ENCODE measurements at regions of chr2 and their contacts with region 1.

Region 1: DNA sequence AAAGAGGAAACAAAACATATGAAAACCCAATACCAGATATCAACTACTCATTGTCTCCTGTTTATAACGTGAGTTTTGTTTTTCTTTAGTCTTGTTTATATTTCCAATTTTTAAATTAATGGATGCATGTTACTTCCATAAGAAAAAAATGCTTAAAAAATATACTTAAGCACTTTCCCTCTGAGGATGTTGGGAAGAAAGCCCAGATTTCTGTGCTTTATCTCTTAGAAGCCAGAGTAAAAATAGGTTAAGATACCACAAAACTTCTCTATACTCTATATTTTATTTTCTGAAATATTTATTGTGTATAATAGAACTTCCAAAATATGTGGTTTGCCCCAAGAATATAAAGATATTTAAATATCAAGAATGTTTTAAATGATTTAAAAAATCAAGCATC is 633.9 kb downstream of the STK39 start:
- DNase-seq: no peak
- ATAC-seq: no peak
- H3K4me3 ChIP-seq: no peak overlapping the region
- H3K27ac ChIP-seq: no peak overlapping the region
- H3K4me1 ChIP-seq: peaks cover 4% of the 10 kb centered on the region; the same call in 1 of the 2 replicates
- H3K27me3 ChIP-seq: no peaks in the 10 kb centered on the region
- CTCF ChIP-seq: no peak
- EP300 ChIP-seq: no peak
- POLR2A ChIP-seq: no peak
- RAD21 ChIP-seq: no peak

Region 2: DNA sequence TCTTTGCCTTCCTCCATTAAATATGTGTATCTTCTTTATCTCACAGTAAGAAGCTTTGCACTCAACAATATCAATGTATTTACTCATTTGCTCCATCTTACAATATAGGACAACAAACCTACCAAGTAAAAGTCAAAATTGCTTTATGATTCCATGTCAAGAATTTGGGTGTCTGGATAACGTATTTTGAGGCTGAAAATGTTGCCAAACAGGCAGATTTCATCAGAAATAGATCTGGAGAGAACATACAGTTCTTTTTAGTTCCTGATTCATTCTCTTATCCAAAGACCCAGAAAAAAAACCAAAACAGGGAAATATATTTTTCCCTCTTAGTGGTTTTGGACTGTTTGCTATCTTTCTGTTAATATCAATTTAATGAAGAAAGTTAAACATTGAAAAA is 12.8 kb after region 1 on chr2:
- CTCF ChIA-PET with region 1: no interaction called
- POLR2A ChIA-PET with region 1: no interaction called
- in situ Hi-C with region 1: no loop called
- intact Hi-C with region 1: loop called (anchors 2 kb)
- DNase-seq: no peak
- ATAC-seq: no peak
- H3K4me3 ChIP-seq: no peak overlapping the region
- H3K27ac ChIP-seq: no peak overlapping the region
- H3K4me1 ChIP-seq: no peaks in the 10 kb centered on the region
- H3K27me3 ChIP-seq: no peaks in the 10 kb centered on the region
- CTCF ChIP-seq: no peak
- EP300 ChIP-seq: no peak
- POLR2A ChIP-seq: no peak
- RAD21 ChIP-seq: no peak

Region 3: GRCh38 chr2:168573128-168573903 is 959.8 kb after region 1 on chr2:
- CTCF ChIA-PET with region 1: no interaction called
- POLR2A ChIA-PET with region 1: no interaction called
- in situ Hi-C with region 1: no loop called
- intact Hi-C with region 1: no loop called
- DNase-seq: no peak
- ATAC-seq: no peak
- H3K4me3 ChIP-seq: no peak overlapping the region
- H3K27ac ChIP-seq: no peak overlapping the region
- H3K4me1 ChIP-seq: no peaks in the 10 kb centered on the region
- H3K27me3 ChIP-seq: no peaks in the 10 kb centered on the region
- CTCF ChIP-seq: no peak
- EP300 ChIP-seq: no peak
- POLR2A ChIP-seq: no peak
- RAD21 ChIP-seq: no peak